ENCODE measurements at regions of chr2 and their contacts with region 1.

Region 1: DNA sequence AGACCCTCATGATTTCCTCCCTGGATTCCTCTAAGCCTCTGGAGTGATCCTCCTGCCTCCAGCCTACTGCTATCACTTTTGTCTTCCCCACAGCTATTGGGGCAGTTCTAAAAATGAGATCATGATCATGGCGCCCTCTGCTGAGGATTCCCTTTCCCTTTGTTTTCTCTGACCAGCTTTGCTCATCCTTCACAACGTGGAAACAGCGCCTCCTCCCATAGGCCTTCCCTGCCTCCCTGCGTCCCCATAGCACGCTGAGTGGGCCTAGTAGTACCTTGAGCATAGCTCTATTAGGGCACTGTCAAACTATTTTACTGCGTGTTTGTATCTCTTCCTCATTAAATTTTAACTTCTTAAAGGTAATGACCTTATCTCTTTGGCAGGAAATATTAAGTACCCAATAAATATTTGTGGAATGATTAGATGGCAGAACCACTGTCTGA is 207.0 kb upstream of the FANCL start:
- DNase-seq: peak in 4 of 14 experiments; percentile 2 to 29 (median 24)
- ATAC-seq: no peak
- H3K4me3 ChIP-seq: no peak overlapping the region
- H3K4me3 Mint-ChIP-seq: no peak overlapping the region
- H3K27ac ChIP-seq: no peak overlapping the region
- H3K27ac Mint-ChIP-seq: no peak overlapping the region
- H3K4me1 ChIP-seq: no peaks in the 10 kb centered on the region
- H3K4me1 Mint-ChIP-seq: no peaks in the 10 kb centered on the region
- H3K27me3 ChIP-seq: no peaks in the 10 kb centered on the region
- H3K27me3 Mint-ChIP-seq: no peaks in the 10 kb centered on the region
- CTCF ChIP-seq: no peak

Region 2: GRCh38 chr2:58407487-58407886 is 40.6 kb before region 1 on chr2:
- CTCF ChIA-PET with region 1: no interaction called
- POLR2A ChIA-PET with region 1: no interaction called
- intact Hi-C with region 1: loop called in 1 of 2 experiments (anchors 1 kb)
- DNase-seq: no peak
- ATAC-seq: no peak
- H3K4me3 ChIP-seq: no peak overlapping the region
- H3K4me3 Mint-ChIP-seq: no peak overlapping the region
- H3K27ac ChIP-seq: no peak overlapping the region
- H3K27ac Mint-ChIP-seq: no peak overlapping the region
- H3K4me1 ChIP-seq: no peaks in the 10 kb centered on the region
- H3K4me1 Mint-ChIP-seq: no peaks in the 10 kb centered on the region
- H3K27me3 ChIP-seq: no peaks in the 10 kb centered on the region
- H3K27me3 Mint-ChIP-seq: no peaks in the 10 kb centered on the region
- CTCF ChIP-seq: no peak

Measured in CD4-positive, alpha-beta T cell (primary cell).